AG04449 (cell line): ENCODE measurements at regions of chr2 and their contacts with region 1.

Region 1: DNA sequence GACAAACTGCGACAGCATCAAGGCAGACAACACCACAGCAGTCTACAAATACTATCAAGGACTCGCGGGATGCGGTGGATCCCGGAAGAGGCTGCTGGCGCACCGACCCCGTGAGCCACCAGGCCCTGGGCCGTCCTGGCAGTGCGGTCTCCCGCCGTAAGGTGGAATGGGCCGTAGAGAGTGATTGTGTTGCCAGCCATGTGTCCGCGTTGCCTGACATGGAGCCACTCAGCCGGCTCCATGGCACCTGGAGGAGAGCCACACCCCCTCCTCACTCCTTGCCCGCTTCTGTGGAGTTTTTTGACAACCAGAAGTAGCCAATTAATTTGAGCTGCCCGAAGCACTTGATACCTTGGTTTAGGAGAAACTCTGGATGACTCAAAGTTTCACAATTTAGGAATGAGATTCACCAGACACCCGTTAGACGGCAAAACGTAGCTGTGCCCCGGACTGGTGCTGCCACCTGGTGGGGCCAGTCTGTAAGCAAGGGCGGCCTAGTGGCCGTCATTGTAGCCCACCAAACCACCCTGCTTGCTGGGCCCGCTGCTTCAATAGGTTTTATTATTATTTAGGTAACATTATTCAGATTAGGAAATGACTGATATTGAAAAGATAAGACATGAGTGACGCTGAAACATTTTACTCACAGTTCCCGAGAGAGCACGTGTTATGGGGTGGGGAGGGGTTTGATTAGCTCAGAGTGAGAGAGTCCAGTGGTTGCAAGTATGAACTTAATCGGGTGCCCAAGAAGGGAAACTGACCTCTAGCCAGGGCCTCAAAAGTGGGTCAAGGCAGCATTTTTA is 10.2 kb upstream of the IMP4 start:
- DNase-seq: no peak
- H3K4me3 ChIP-seq: no peak overlapping the region
- CTCF ChIP-seq: peak; percentile 96

Region 2: GRCh38 chr2:129212299-129212958 is 1120.0 kb before region 1 on chr2:
- CTCF ChIA-PET with region 1: no interaction called
- POLR2A ChIA-PET with region 1: no interaction called
- DNase-seq: no peak
- H3K4me3 ChIP-seq: no peak overlapping the region
- CTCF ChIP-seq: no peak

Region 3: GRCh38 chr2:129936334-129936934 is 396.0 kb before region 1 on chr2:
- CTCF ChIA-PET with region 1: interaction called, 60 read pairs
- POLR2A ChIA-PET with region 1: no interaction called
- DNase-seq: no peak
- H3K4me3 ChIP-seq: no peak overlapping the region
- CTCF ChIP-seq: peak; percentile 28

Region 4: DNA sequence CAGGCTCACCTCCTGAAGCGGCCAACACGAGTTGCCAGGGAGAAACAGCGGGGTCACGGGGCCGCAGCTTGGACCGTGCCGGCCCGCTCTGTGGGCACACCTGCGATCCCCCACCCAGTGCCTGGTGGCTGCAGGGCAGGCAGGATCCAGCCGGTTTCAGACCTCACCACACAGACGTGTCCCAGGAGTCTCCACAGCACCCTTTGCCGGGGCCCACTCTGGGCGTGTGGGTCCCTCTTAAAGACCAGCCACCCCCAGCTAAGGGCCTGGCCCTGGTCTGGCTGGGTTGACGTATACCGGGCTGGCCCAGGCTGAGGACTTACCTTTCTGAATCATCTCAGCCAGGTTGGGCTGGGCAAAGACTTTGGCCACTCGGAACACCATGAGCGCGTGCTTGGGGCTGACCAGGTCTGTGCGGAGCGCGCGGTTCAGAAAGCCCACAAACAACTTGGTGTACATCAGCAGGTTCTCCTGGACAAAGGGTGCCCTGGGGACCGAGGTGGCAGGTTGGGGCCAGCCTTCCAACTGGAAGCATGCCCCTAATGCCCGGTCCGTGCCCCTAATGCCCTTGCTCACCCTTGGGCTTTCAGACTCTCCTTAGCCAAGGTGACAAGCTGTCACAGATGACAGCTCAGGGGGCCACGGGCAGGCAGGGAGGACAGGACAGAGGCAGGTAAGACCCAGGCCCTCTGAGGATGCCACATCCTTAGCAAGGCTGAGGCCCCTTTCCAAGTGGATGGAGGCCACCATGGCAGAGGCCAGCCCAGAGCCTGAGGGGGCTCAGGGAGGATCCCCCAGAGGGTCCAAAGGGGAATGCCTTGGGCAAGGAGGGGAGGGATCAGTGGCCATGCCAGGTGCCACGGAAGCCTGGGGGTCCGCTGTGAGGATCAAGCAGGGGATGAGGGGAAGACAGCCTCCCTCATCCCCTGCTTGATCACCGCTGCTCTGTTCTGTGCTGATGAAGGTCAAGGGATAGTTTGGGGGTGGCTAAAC is 177.4 kb before region 1 on chr2:
- CTCF ChIA-PET with region 1: interaction called, 11 read pairs
- POLR2A ChIA-PET with region 1: no interaction called
- DNase-seq: no peak
- H3K4me3 ChIP-seq: no peak overlapping the region
- CTCF ChIP-seq: no peak

Region 5: GRCh38 chr2:130181325-130181879 is 151.1 kb before region 1 on chr2 and contains the start of gene SMPD4:
- CTCF ChIA-PET with region 1: interaction called, 88 read pairs
- POLR2A ChIA-PET with region 1: interaction called, 4 read pairs
- DNase-seq: peak; percentile 65
- H3K4me3 ChIP-seq: peak within 1 kb of the TSS; percentile 88
- CTCF ChIP-seq: no peak

Region 6: GRCh38 chr2:130342533-130343275 is 10.2 kb after region 1 on chr2 and contains the start of gene IMP4:
- CTCF ChIA-PET with region 1: interaction called, 20 read pairs
- POLR2A ChIA-PET with region 1: interaction called, 3 read pairs
- DNase-seq: peak; percentile 97
- H3K4me3 ChIP-seq: peak within 1 kb of the TSS; percentile 93
- CTCF ChIP-seq: peak; percentile 46